ENCODE measurements at regions of chr1 and their contacts with region 1.

Region 1: GRCh38 chr1:178126790-178127189 is 32.9 kb downstream of the RASAL2 start:
- DNase-seq: peak; percentile 49 to 57
- H3K4me3 ChIP-seq: no peak overlapping the region; the same call in 1 of the 2 replicates
- H3K4me3 Mint-ChIP-seq: peak overlapping the region; percentile 65
- H3K27ac Mint-ChIP-seq: peak overlapping the region; percentile 96
- H3K4me1 ChIP-seq: peaks cover 59% of the 10 kb centered on the region
- H3K4me1 Mint-ChIP-seq: peaks cover 6% of the 10 kb centered on the region
- H3K27me3 ChIP-seq: no peaks in the 10 kb centered on the region
- H3K27me3 Mint-ChIP-seq: no peaks in the 10 kb centered on the region
- CTCF ChIP-seq: no peak

Region 2: GRCh38 chr1:178209935-178210334 is 83.1 kb after region 1 on chr1:
- CTCF ChIA-PET with region 1: no interaction called
- POLR2A ChIA-PET with region 1: no interaction called
- intact Hi-C with region 1: loop called (anchors 1 kb)
- DNase-seq: no peak
- H3K4me3 ChIP-seq: no peak overlapping the region
- H3K4me3 Mint-ChIP-seq: no peak overlapping the region
- H3K27ac Mint-ChIP-seq: peak overlapping the region; percentile 39
- H3K4me1 ChIP-seq: peaks cover 21% of the 10 kb centered on the region; the same call in 1 of the 2 replicates
- H3K4me1 Mint-ChIP-seq: peaks cover 29% of the 10 kb centered on the region
- H3K27me3 ChIP-seq: no peaks in the 10 kb centered on the region
- H3K27me3 Mint-ChIP-seq: no peaks in the 10 kb centered on the region
- CTCF ChIP-seq: no peak

Region 3: GRCh38 chr1:178267646-178268094 is 140.9 kb after region 1 on chr1:
- CTCF ChIA-PET with region 1: no interaction called
- POLR2A ChIA-PET with region 1: no interaction called
- intact Hi-C with region 1: loop called (anchors 1 kb)
- DNase-seq: peak; percentile 34 to 47
- H3K4me3 ChIP-seq: no peak overlapping the region
- H3K4me3 Mint-ChIP-seq: peak overlapping the region; percentile 59
- H3K27ac Mint-ChIP-seq: peak overlapping the region; percentile 96
- H3K4me1 ChIP-seq: peaks cover 73% of the 10 kb centered on the region
- H3K4me1 Mint-ChIP-seq: peaks cover 48% of the 10 kb centered on the region
- H3K27me3 ChIP-seq: no peaks in the 10 kb centered on the region
- H3K27me3 Mint-ChIP-seq: no peaks in the 10 kb centered on the region
- CTCF ChIP-seq: no peak